Esophagus muscularis mucosa (tissue), 4 donors: ENCODE measurements at regions of chr2 and their contacts with region 1.

Region 1: DNA sequence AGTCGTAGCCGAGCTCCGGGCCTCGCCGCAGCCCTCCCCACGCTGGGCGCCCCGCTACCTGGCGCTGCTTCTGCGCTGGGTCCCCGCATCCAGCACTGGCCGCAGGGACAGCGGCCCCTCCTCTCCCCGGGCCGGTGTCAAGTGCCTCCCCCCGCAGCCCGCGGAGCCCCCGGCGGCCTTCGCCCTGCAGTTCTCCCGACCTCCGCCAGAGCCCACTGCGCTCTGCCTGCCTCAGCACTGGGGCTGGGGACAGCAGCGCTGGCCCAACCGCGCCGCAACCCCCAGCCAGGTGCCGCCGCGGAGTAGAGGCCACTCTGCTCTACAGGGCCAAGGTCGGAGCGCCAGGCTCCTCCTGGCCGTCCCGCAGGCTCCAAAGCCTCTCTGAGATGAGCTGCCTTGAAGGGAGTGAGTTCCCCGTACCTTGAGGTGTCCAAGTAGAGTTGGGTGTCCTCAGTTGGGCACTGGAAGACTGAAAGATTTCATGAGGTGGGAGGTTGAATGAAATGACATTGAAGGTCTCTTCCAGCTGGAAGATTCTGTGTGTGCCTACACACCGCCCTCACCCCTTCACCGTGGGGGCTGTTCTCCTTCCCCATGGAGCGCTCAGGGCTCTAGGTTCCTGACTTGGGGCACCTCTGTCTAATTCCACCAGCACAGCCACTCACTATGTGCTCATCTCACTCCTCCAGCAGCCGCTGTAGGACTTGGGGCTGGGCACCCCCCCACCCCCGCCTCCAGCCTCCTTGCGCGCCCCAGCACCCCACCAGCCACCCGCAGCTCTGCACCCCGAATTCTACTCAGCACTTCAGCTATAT is 854 bp upstream of the DNMT3A start:
- DNase-seq: no peak
- H3K4me3 ChIP-seq: peak overlapping the region; percentile 80 to 95 (median 82)
- H3K27ac ChIP-seq: peak overlapping the region; percentile 86 to 89 (median 88)
- H3K4me1 ChIP-seq: peaks cover 31 to 43% (median 41%) of the 10 kb centered on the region in 4 donors
- H3K27me3 ChIP-seq: no peaks in the 10 kb centered on the region
- CTCF ChIP-seq: peak in 2 of 3 experiments; percentile 97 to 98
- EP300 ChIP-seq: no peak
- POLR2A ChIP-seq: no peak

Region 2: GRCh38 chr2:24945907-24946306 is 396.7 kb before region 1 on chr2:
- intact Hi-C with region 1: no loop called
- DNase-seq: no peak
- H3K4me3 ChIP-seq: no peak overlapping the region
- H3K27ac ChIP-seq: no peak overlapping the region
- H3K4me1 ChIP-seq: peaks cover 0 to 3% (median 0%) of the 10 kb centered on the region in 4 donors
- H3K27me3 ChIP-seq: no peaks in the 10 kb centered on the region
- CTCF ChIP-seq: no peak
- EP300 ChIP-seq: no peak
- POLR2A ChIP-seq: no peak

Region 3: GRCh38 chr2:25276569-25277465 is 65.8 kb before region 1 on chr2:
- intact Hi-C with region 1: loop called (anchors 2 kb)
- DNase-seq: no peak
- H3K4me3 ChIP-seq: peak overlapping the region; percentile 53 to 58 (median 56)
- H3K27ac ChIP-seq: peak overlapping the region; percentile 80 to 87 (median 84)
- H3K4me1 ChIP-seq: peaks cover 45 to 79% (median 77%) of the 10 kb centered on the region in 4 donors
- H3K27me3 ChIP-seq: no peaks in the 10 kb centered on the region
- CTCF ChIP-seq: peak; percentile 85 to 98 (median 88)
- EP300 ChIP-seq: no peak
- POLR2A ChIP-seq: no peak

Region 4: DNA sequence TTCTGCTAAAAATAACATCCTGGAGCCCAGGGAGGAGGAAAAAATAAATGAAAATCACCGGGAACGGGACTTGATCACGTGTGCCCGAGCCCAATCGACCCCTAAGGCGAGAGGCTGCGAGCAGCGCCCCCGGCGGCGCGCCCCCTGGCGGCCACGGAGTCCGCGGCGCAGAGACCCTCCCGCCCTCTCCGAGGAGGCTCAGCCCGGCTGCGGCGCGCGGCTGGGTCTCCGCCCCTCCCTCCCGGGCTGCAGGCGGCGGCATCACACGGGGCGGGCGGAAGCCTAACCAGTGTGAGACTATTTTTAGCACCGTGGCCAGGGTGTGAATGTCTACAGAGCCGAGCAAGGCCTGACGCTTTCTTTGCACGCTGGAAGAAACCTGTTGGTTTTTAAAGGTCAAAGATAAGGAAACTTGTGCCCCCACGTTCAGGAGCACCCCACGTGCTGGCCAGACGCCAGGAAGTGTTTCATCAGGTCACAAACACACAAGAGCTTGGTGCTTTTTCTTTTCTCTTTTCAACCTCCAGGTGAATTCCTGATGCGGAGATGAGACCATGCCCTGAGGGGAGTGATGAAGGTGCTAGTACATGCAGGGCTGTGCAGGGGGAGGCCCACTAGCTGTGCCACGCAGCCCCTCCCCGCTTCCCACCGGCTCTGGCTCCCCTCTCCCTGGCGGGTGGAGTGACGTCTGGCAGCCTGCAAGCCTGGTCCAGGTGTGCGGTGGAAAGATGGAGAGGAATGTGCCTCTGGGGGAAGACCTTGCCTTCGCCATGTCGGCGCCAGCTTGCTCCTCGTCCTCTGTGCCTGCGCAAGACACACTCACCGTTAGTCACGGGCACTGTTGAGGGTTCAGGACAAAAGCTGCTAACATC is 34.4 kb after region 1 on chr2:
- intact Hi-C with region 1: loop called (anchors 2 kb)
- DNase-seq: peak; percentile 94
- H3K4me3 ChIP-seq: peak overlapping the region; percentile 22 to 49 (median 40)
- H3K27ac ChIP-seq: peak overlapping the region; percentile 50 to 68 (median 58)
- H3K4me1 ChIP-seq: peaks cover 12 to 26% (median 23%) of the 10 kb centered on the region in 4 donors
- H3K27me3 ChIP-seq: no peaks in the 10 kb centered on the region
- CTCF ChIP-seq: peak; percentile 93 to 96 (median 95)
- EP300 ChIP-seq: no peak
- POLR2A ChIP-seq: no peak